Activated CD4-positive, alpha-beta T cell treated with anti-CD3 and anti-CD28 coated beads, Interleukin-2, amount 10 ng/mL, durations not matched to agents 24 days and 14 days (primary cell): ENCODE measurements at regions of chr1 and their contacts with region 1.

Region 1: DNA sequence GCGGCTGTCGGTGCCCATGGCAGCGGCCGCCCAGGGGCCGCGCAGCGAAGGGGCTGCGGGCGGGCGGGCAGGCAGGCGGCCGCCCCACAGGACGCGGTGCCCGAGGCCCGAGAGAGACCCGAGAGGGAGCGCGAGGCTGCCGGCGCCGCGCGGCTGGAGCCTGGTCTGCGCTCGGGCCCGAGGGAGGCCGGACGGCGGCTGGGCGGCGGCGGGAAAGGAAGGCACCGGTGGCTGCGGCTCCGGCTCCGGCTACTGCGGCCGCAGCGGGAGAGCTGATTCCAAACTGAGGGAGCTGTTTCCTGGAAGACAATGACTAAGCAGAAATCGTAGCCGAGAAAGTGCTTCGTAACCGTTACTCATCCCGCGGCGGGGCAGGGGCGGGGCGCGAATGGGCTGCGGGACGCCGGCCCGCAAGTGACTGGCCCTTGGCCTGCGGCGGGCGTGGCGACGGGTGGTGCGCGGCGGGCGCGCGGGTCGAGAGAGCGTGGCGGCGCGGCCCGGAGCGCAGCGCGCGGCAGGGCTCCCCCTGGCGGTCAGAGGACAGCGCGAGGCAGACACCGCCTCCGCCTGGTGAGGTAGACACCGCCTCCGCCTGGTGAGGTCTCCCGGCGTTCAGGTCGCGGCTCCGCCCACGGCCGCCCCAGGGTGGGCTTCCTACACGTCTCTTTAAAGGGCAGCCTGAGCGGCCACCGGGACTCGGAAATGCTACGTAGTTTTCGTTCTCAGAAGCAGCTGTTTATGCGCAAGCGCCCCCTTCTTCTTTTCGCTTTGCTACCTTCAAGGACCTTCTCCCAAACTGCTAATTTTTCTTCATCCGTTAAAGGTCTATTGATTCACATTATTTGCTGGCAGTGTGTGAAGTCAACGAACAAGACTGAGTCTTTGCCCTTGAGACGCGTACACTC is at the start of gene GCLM:
- DNase-seq: peak; percentile 97
- H3K4me3 Mint-ChIP-seq: peak within 1 kb of the TSS; percentile 87
- H3K27ac Mint-ChIP-seq: peak within 1 kb of the TSS; percentile 93
- H3K4me1 Mint-ChIP-seq: peaks cover 29% of the 10 kb centered on the region
- H3K27me3 Mint-ChIP-seq: peaks cover 20% of the 10 kb centered on the region
- total RNA-seq, gene GCLM: 20.9 and 22.4 TPM in 2 replicates

Region 2: GRCh38 chr1:93878889-93879586 is 30.4 kb before region 1 on chr1 and contains the start of gene DNTTIP2:
- intact Hi-C with region 1: loop called (anchors 1 kb)
- DNase-seq: peak; percentile 97
- H3K4me3 Mint-ChIP-seq: peak within 1 kb of the TSS; percentile 93
- H3K27ac Mint-ChIP-seq: peak within 1 kb of the TSS; percentile 97
- H3K4me1 Mint-ChIP-seq: peaks cover 33% of the 10 kb centered on the region
- H3K27me3 Mint-ChIP-seq: no peaks in the 10 kb centered on the region
- total RNA-seq, gene DNTTIP2: 85.4 and 89.9 TPM in 2 replicates

Region 3: GRCh38 chr1:93925206-93925605 is 15.8 kb after region 1 on chr1:
- intact Hi-C with region 1: no loop called
- DNase-seq: no peak
- H3K4me3 Mint-ChIP-seq: no peak overlapping the region
- H3K27ac Mint-ChIP-seq: no peak overlapping the region
- H3K4me1 Mint-ChIP-seq: peaks cover 3% of the 10 kb centered on the region
- H3K27me3 Mint-ChIP-seq: peaks cover 12% of the 10 kb centered on the region